CD4-positive, alpha-beta T cell (primary cell): ENCODE measurements at regions of chr22 and their contacts with region 1.

Region 1: GRCh38 chr22:26483439-26484359 is at the starts of genes HPS4 and SRRD:
- DNase-seq: peak; percentile 86 to 98 (median 91)
- ATAC-seq: peak; percentile 79
- H3K4me3 ChIP-seq: peak within 1 kb of the TSS; percentile 76
- H3K4me3 Mint-ChIP-seq: peak within 1 kb of the TSS; percentile 97
- H3K27ac ChIP-seq: peak within 1 kb of the TSS; percentile 86 to 92
- H3K27ac Mint-ChIP-seq: peak within 1 kb of the TSS; percentile 94
- H3K4me1 ChIP-seq: peaks cover 57% of the 10 kb centered on the region
- H3K4me1 Mint-ChIP-seq: peaks cover 73% of the 10 kb centered on the region
- H3K27me3 ChIP-seq: no peaks in the 10 kb centered on the region
- H3K27me3 Mint-ChIP-seq: no peaks in the 10 kb centered on the region
- CTCF ChIP-seq: no peak
- total RNA-seq, gene HPS4: 61.6 to 67.0 TPM
- total RNA-seq, gene SRRD: 25.8 to 27.2 TPM

Region 2: DNA sequence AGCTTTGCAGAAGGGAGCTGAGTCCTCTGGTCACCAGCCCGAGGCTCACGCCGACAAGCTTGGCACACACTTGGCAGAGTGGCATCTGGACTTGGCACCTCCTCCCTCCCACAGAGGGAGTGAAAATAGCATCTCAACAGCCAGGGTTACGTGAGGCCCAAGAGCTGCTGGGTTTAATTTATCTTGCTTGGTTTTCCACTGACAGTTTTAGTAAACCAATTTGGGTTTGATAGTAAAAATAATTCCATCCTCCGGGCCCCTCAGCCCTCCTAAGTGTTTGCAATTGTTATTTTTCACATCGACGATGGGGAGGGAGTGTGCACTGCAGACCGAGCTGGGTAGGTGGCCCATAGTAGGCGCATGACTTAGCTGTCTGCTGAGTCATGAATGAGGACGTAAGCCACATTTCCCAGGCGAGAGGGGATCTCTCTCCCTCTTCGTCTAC is 162.2 kb before region 1 on chr22:
- CTCF ChIA-PET with region 1: no interaction called
- POLR2A ChIA-PET with region 1: no interaction called
- intact Hi-C with region 1: no loop called
- DNase-seq: no peak
- ATAC-seq: no peak
- H3K4me3 ChIP-seq: no peak overlapping the region
- H3K4me3 Mint-ChIP-seq: no peak overlapping the region
- H3K27ac ChIP-seq: no peak overlapping the region
- H3K27ac Mint-ChIP-seq: no peak overlapping the region
- H3K4me1 ChIP-seq: no peaks in the 10 kb centered on the region
- H3K4me1 Mint-ChIP-seq: no peaks in the 10 kb centered on the region
- H3K27me3 ChIP-seq: peaks cover 2 to 6% of the 10 kb centered on the region in 2 experiments
- H3K27me3 Mint-ChIP-seq: peaks cover 25% of the 10 kb centered on the region
- CTCF ChIP-seq: no peak

Region 3: DNA sequence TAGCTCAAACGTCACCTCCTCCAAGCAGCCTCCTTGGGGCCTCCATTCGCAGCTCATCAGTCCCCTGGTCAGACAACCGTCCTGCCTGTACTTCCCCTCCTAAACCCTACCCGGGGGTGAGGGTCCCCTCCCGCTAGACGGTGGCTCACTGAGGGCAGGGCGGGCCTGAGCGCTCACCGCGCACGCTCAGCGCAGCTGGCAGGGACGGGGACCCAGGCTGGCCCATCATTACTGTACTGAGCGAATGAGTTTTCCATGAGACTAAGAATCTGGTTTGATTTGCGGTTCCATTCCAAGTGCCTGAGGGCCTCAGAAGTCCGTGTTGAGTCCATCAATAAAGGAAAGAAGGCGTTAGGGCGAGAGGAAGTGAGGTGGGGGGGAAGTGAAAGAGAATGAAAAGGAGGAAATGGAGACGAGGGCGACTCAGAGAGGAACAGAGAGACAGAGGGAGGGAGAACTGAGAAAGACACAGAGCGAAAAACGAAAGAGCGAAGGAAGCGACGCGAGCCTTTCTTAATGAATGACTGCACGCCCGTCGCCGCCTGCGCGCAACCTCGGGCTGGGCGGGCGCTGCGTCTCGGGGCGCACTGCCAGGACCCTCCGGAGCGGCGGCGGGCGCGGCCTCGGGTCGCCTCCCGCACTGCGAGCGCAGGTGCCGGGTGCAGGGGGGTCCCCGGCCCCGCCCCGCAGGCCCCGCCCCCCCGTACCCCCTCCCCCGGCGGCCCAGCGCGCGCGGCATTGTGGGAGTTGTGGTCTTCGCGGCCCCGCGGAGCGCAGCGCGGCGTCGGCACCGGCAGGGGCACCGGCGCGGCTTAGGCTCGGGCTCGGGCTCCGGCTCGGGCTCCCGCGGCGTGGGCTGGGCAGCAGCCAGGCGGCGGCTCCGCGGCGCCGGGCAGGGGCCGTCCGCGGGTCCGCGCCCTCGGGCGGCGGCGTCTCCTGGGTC is 54.9 kb before region 1 on chr22 and contains the start of gene ASPHD2:
- CTCF ChIA-PET with region 1: no interaction called
- POLR2A ChIA-PET with region 1: interaction called, 46 read pairs
- intact Hi-C with region 1: loop called (anchors 1 to 2 kb)
- DNase-seq: peak; percentile 61 to 92 (median 77)
- ATAC-seq: peak; percentile 85
- H3K4me3 ChIP-seq: peak within 1 kb of the TSS; percentile 87
- H3K4me3 Mint-ChIP-seq: peak within 1 kb of the TSS; percentile 98
- H3K27ac ChIP-seq: peak within 1 kb of the TSS; percentile 96 to 97
- H3K27ac Mint-ChIP-seq: peak within 1 kb of the TSS; percentile 94
- H3K4me1 ChIP-seq: peaks cover 30% of the 10 kb centered on the region
- H3K4me1 Mint-ChIP-seq: peaks cover 31% of the 10 kb centered on the region
- H3K27me3 ChIP-seq: no peaks in the 10 kb centered on the region
- H3K27me3 Mint-ChIP-seq: no peaks in the 10 kb centered on the region
- CTCF ChIP-seq: no peak
- total RNA-seq, gene ASPHD2: 0.70 to 0.85 TPM

Region 4: GRCh38 chr22:26502688-26503561 is 19.2 kb after region 1 on chr22:
- CTCF ChIA-PET with region 1: interaction called, 3 read pairs
- POLR2A ChIA-PET with region 1: interaction called, 29 read pairs
- intact Hi-C with region 1: no loop called
- DNase-seq: peak; percentile 25 to 83 (median 40)
- ATAC-seq: peak; percentile 86
- H3K4me3 ChIP-seq: no peak overlapping the region
- H3K4me3 Mint-ChIP-seq: no peak overlapping the region
- H3K27ac ChIP-seq: peak overlapping the region in 1 of 2 donors; percentile 13
- H3K27ac Mint-ChIP-seq: peak overlapping the region; percentile 78
- H3K4me1 ChIP-seq: peaks cover 17% of the 10 kb centered on the region
- H3K4me1 Mint-ChIP-seq: peaks cover 21% of the 10 kb centered on the region
- H3K27me3 ChIP-seq: no peaks in the 10 kb centered on the region
- H3K27me3 Mint-ChIP-seq: no peaks in the 10 kb centered on the region
- CTCF ChIP-seq: peak; percentile 61

Region 5: DNA sequence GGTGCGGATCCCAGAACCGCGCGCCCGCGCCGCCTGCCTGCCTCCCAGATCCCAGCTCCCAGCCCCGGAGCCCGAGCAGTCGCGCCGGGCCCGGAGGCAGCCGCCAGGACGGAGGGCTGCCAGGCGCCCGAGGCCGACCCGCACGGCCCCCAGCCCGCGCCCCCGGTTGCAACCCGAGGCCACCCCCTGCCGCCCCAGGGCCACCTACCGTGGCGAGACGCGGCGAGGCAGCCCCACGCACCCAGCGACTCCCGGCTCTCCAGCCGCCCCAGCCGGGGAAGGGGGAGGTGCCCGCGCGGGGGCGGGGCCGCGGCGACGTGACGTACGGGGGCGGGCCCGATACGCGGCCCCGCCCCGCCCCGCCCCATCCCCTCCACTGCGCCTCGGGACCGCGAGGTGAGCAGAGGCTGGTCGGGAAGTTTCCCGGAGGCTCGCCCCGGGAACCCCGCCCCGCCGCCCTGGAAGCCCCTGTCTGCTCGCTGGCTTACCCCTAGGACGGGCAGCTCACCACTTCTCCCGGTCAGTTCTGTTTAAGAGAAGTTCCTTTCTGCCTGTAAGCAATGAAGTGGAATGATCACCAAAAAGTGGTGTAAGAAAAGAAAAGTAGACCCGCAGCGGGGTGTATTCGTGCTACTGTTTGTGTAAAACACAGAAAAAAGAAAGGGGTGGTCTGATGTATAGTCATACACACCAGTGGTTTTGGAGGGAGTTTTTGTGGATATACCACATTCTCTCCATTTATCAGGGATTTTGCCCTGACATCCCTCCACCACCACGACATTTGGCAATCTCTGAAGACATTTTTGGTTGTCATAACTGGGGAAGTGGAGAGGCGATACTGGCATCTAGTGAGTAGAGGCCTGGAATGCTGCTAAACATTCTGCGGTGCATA is 106.4 kb after region 1 on chr22 and contains the start of gene TPST2:
- CTCF ChIA-PET with region 1: no interaction called
- POLR2A ChIA-PET with region 1: interaction called, 5 read pairs
- intact Hi-C with region 1: loop called (anchors 1 to 2 kb)
- DNase-seq: peak; percentile 58 to 93 (median 74)
- ATAC-seq: peak; percentile 83
- H3K4me3 ChIP-seq: peak within 1 kb of the TSS; percentile 79
- H3K4me3 Mint-ChIP-seq: peak within 1 kb of the TSS; percentile 93
- H3K27ac ChIP-seq: peak within 1 kb of the TSS; percentile 37 to 59
- H3K27ac Mint-ChIP-seq: peak within 1 kb of the TSS; percentile 89
- H3K4me1 ChIP-seq: peaks cover 73% of the 10 kb centered on the region
- H3K4me1 Mint-ChIP-seq: peaks cover 66% of the 10 kb centered on the region
- H3K27me3 ChIP-seq: no peaks in the 10 kb centered on the region
- H3K27me3 Mint-ChIP-seq: no peaks in the 10 kb centered on the region
- CTCF ChIP-seq: no peak
- total RNA-seq, gene TPST2: 7.2 to 7.4 TPM

Region 6: DNA sequence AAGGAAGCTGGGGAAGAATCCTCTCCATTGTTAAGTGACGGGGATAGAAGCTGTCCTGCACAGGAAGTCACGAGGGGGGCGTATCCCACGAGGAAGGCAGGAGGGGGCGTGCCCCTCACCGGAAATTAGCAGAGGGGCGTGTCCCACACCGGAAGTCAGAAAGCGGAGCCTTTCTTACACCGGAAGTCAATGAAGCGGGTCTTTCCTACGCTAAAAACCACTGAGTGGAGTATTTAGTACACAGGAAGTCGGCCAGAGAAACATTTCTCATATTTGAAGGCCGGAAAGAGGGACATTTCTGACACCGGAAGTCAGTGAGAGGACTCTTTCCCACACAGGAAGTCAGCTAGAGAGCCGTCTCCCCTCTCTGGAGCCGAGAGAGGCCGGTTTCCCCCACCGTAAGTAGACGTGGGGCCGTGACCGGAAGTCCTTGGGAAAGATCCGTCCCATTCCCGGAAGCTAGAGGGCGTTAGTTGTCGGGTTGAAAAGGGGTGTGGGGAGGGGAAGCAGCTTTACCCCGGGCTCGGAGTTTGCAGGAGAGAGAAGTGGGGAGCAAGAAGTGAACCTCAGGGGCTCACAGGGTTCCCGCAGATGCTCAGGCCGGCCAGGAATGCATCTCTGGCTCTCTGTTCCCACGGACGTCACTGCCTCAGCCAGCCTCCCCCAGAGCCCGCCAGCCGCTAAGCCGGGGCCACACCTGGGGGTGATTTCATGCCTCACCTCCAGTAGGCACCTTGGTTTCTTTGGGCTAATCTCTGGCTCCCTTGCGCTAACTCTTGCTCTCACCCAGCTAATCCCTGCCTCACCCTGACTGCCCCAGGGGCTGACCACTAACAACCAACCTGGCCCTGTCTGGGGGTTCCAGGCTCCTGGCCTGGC is 189.1 kb after region 1 on chr22:
- CTCF ChIA-PET with region 1: interaction called, 3 read pairs
- POLR2A ChIA-PET with region 1: interaction called, 71 read pairs
- intact Hi-C with region 1: loop called in 1 of 2 experiments (anchors 2 kb)
- DNase-seq: peak; percentile 77 to 97 (median 91)
- ATAC-seq: peak; percentile 67
- H3K4me3 ChIP-seq: peak overlapping the region; percentile 79
- H3K4me3 Mint-ChIP-seq: peak overlapping the region; percentile 97
- H3K27ac ChIP-seq: peak overlapping the region; percentile 88 to 90
- H3K27ac Mint-ChIP-seq: peak overlapping the region; percentile 95
- H3K4me1 ChIP-seq: peaks cover 93% of the 10 kb centered on the region
- H3K4me1 Mint-ChIP-seq: peaks cover 84% of the 10 kb centered on the region
- H3K27me3 ChIP-seq: no peaks in the 10 kb centered on the region
- H3K27me3 Mint-ChIP-seq: no peaks in the 10 kb centered on the region
- CTCF ChIP-seq: peak; percentile 23